A549 (cell line): ENCODE measurements at regions of chr11 and their contacts with region 1.

Region 1: GRCh38 chr11:72238040-72238450 is 5.9 kb downstream of the PHOX2A start:
- DNase-seq: peak; percentile 82 to 92
- ATAC-seq: peak; percentile 70 to 86
- H3K4me3 ChIP-seq: no peak overlapping the region
- H3K27ac ChIP-seq: no peak overlapping the region
- H3K4me1 ChIP-seq: peaks cover 12% of the 10 kb centered on the region
- CTCF ChIP-seq: peak; percentile 71
- EP300 ChIP-seq: no peak
- POLR2A ChIP-seq: no peak
- RAD21 ChIP-seq: peak; percentile 63 to 65

Region 2: DNA sequence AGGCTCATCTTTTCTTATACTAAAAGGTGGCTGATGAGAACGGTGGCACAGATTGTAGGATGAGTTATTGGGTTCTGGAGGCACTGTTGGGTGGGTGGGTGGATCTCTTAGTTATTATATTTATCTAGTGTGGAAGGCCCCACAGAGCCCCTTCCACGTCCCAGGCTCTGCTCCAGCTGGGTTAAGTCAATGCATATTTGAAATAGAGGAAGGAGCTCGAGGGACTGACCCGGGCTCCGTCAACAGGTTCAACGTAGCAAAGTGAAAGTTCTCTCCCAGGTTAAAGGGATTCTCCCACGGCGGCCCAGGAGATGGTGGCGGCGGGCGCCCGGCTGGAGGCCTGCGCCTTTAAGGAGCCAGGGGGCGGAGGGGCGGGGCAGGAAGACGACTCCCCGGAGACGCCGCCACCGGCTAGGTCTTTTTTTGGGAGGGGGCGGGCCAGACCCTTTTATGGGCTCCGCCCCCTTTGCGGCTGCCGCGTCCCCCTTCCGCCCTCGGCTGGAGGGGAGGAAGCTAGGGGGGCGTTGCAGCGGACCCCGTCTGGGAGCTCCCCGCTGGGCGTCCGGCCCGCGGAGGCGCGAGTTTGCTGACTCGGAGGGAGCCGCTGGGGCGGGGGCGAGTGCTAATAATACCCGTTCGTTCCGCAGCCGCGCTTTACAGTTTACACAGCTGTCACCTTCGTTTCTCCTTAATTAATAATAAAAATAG is 15.0 kb before region 1 on chr11:
- CTCF ChIA-PET with region 1: interaction called, 83 read pairs
- POLR2A ChIA-PET with region 1: interaction called, 6 read pairs
- DNase-seq: peak; percentile 53 to 92
- ATAC-seq: peak; percentile 75 to 88
- H3K4me3 ChIP-seq: peak overlapping the region; percentile 92
- H3K27ac ChIP-seq: peak overlapping the region; percentile 97 to 98
- H3K4me1 ChIP-seq: peaks cover 24% of the 10 kb centered on the region
- CTCF ChIP-seq: no peak
- EP300 ChIP-seq: no peak
- POLR2A ChIP-seq: no peak
- RAD21 ChIP-seq: no peak

Region 3: DNA sequence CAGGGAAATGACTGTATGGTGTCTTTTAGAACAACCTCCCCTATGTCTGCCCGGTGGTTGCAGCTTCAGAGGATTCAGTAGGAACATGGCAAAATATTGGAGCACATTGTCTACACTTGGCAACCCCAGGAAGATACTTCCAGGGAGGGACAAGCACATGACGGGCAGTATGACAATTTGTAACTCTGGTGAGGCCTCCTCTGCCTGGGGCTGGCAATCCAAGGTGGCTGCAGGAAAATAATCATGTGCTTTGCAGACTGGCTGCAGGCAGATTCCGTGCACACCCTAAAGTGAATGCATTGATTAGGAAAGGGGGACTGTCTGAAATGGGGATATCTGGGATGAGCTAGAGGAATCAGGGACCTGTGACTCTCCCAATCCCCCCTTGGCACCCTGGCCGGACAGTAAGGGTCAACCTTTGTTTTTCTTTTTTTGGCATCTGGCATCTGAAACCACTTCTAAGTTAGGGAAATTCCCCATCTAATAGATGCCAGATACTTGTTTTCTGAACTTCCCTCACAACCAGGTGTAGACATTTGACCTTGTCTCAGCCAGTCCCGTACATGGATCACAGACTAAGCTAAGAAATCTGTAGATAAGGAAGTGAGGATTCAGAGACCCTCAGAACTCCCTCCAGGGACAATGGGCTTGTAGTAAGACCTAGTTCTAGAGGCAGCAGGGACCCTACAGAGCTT is 16.4 kb after region 1 on chr11:
- CTCF ChIA-PET with region 1: interaction called, 21 read pairs
- POLR2A ChIA-PET with region 1: no interaction called
- DNase-seq: no peak
- ATAC-seq: no peak
- H3K4me3 ChIP-seq: no peak overlapping the region
- H3K27ac ChIP-seq: no peak overlapping the region
- H3K4me1 ChIP-seq: no peaks in the 10 kb centered on the region
- CTCF ChIP-seq: no peak
- EP300 ChIP-seq: no peak
- POLR2A ChIP-seq: no peak
- RAD21 ChIP-seq: no peak

Region 4: DNA sequence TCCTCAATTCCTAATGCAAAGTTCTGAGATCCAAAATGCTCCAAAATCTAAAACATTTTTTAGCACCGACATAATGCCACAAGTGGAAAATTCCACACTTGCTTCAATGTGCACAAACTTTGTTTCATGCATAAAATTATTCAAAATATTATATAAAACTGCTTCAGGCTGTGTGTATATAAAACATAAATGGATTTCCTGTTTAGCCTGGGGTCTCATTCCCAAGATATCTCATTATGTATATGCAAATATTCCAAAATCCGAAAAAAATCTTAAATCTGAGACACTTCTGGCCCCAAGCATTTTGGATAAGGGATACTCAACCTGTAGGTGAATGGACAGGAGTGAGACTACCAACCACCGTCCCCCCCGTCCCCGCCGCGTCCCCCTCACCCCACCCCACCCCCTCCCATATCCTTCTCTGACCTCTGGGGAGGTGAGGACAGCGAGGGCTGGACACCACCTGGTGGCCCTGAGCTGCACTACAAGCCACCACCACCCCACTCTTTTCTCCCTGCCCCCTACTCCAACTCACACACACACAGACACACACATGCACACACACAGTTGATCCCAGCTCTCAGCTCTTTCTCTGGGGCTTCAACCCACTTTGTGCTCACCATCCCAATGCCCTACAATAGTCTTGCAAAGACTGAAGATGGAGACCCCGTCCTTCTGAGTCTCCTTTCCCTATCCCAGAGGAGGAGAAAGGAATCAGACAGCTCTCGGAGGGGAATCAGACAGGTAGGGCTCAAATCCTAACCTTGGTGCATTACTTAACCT is 335.2 kb after region 1 on chr11:
- CTCF ChIA-PET with region 1: no interaction called
- POLR2A ChIA-PET with region 1: no interaction called
- DNase-seq: peak; percentile 47 to 67
- ATAC-seq: peak; percentile 85 to 94
- H3K4me3 ChIP-seq: no peak overlapping the region
- H3K27ac ChIP-seq: no peak overlapping the region
- H3K4me1 ChIP-seq: peaks cover 3% of the 10 kb centered on the region; the same call in 1 of the 3 replicates
- CTCF ChIP-seq: peak; percentile 59
- EP300 ChIP-seq: no peak
- POLR2A ChIP-seq: no peak
- RAD21 ChIP-seq: peak; percentile 68 to 74